ENCODE measurements at regions of chr1 and their contacts with region 1.

Region 1: GRCh38 chr1:63864224-63864641 is 90.4 kb downstream of the ROR1 start:
- DNase-seq: no peak

Region 2: GRCh38 chr1:63698001-63698838 is 166.0 kb before region 1 on chr1:
- intact Hi-C with region 1: loop called (anchors 5 kb)
- DNase-seq: peak; percentile 80

Region 3: GRCh38 chr1:63787875-63788274 is 76.4 kb before region 1 on chr1:
- intact Hi-C with region 1: loop called (anchors 5 kb)
- DNase-seq: no peak

Region 4: DNA sequence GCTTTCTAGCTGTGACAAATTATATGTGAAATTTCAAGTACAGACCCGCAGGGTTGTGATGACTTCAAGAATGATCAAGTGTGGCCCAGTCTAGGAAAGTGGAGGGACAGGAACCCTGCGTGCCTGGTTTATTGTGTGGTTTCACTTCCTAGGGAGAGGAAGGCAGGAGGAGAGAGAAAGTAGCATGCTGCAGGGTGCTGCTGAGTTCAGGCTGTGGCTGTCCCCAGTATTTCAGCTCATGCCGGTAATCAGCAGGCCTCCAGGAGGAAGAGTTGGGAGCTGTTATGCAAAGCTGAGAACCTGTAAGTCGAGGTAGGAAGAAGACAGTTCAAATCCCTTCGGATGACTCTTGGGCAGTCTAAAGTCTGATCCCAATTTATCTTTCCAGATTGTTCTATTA is 50.0 kb after region 1 on chr1:
- intact Hi-C with region 1: loop called (anchors 5 kb)
- DNase-seq: no peak